ENCODE measurements at regions of chr11 and their contacts with region 1.

Region 1: GRCh38 chr11:86508604-86509587 is 134.2 kb downstream of the CCDC81 start:
- DNase-seq: no peak
- ATAC-seq: peak; percentile 63
- H3K4me3 ChIP-seq: no peak overlapping the region
- H3K27ac ChIP-seq: peak overlapping the region; percentile 71; the same call in 1 of the 2 replicates
- H3K4me1 ChIP-seq: peaks cover 16% of the 10 kb centered on the region; the same call in 1 of the 2 replicates
- H3K27me3 ChIP-seq: no peaks in the 10 kb centered on the region
- CTCF ChIP-seq: no peak

Region 2: DNA sequence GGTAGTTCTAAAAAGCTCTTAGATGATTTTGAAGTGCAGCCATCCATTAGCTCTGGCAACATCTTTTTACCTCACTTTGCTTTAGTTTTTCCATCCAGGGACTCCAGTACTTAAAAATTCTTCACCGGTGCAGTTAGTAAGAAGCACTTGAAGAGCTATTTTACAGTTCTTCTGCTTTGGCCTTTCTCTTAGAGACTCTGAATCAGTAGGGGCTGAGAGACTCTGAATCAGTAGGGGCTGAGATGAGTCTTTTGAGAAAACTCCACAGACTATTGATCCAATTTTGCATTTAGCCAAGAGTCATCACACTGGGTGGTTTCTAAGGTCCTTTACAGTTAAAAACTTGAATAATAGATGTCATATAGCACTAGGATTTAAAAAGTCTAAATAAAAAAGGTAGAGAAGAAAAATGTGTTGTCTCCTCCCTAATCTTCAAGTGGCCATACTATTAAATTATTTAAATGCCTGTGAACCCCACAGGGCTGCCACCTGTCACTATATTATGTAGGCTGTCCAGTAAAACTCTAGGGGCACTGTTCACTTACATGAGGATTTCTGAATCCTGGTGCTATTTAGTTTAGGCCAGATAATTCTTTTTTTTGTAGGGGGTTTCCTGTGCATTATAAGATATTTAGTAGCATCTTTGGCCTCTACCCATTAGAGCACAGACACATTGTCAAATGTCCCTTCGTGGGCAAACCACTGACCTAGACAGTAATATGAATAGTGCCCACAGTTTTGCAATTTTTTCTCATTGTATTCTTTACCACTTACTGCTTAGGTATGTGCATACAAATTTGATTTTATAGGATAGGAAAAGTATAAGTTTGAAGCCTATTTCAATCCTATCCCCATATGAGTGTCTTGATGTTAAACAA is 233.2 kb before region 1 on chr11:
- CTCF ChIA-PET with region 1: no interaction called
- POLR2A ChIA-PET with region 1: no interaction called
- in situ Hi-C with region 1: no loop called
- intact Hi-C with region 1: no loop called
- DNase-seq: no peak
- ATAC-seq: no peak
- H3K4me3 ChIP-seq: no peak overlapping the region
- H3K27ac ChIP-seq: no peak overlapping the region
- H3K4me1 ChIP-seq: no peaks in the 10 kb centered on the region
- H3K27me3 ChIP-seq: no peaks in the 10 kb centered on the region
- CTCF ChIP-seq: peak; percentile 18; the same call in 1 of the 2 replicates

Region 3: GRCh38 chr11:86497181-86497701 is 11.7 kb before region 1 on chr11:
- CTCF ChIA-PET with region 1: no interaction called
- POLR2A ChIA-PET with region 1: interaction called, 11 read pairs
- in situ Hi-C with region 1: no loop called
- intact Hi-C with region 1: no loop called
- DNase-seq: no peak
- ATAC-seq: no peak
- H3K4me3 ChIP-seq: no peak overlapping the region
- H3K27ac ChIP-seq: peak overlapping the region; percentile 65
- H3K4me1 ChIP-seq: no peaks in the 10 kb centered on the region
- H3K27me3 ChIP-seq: no peaks in the 10 kb centered on the region
- CTCF ChIP-seq: no peak

Region 4: GRCh38 chr11:86896441-86896841 is 387.5 kb after region 1 on chr11:
- CTCF ChIA-PET with region 1: no interaction called
- POLR2A ChIA-PET with region 1: no interaction called
- in situ Hi-C with region 1: no loop called
- intact Hi-C with region 1: no loop called
- DNase-seq: no peak
- ATAC-seq: no peak
- H3K4me3 ChIP-seq: no peak overlapping the region
- H3K27ac ChIP-seq: no peak overlapping the region
- H3K4me1 ChIP-seq: no peaks in the 10 kb centered on the region
- H3K27me3 ChIP-seq: no peaks in the 10 kb centered on the region
- CTCF ChIP-seq: no peak

Measured in Panc1 (cell line).